ENCODE measurements at regions of chrX and their contacts with region 1.

Region 1: DNA sequence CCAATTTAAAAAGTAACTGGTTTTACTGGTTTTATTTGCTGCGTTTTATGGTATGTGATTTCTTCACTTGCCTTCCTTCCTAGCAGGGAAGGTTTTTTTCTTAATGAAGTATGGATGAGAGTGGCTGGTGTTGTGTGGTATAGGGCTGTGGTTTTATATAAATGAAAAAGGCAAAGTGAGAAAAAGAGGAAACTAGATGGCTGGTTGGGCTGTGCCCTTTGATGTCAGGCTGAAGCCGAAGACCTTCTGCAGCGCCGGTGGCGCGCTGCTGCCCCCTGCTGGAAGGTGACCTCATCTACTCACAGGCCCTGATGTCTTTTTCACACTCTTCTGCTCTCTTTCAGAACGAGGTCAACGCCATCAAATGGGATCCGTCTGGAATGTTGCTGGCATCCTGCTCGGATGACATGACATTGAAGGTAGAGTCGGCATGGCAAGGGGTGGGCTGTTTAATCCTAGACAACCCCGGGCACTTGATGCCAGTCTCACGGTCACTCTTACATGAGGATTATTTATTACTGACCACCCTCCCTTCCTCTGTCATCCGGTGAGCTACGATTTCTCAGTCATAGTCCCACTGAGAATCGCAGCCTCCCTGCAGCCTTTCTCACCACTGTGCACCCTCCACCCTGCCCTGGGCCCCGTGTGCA is 56.6 kb downstream of the GPR143 start:
- DNase-seq: peak; percentile 62 to 88 (median 76)
- ATAC-seq: peak; percentile 89
- H3K4me3 ChIP-seq: no peak overlapping the region
- H3K4me3 Mint-ChIP-seq: no peak overlapping the region
- H3K27ac ChIP-seq: no peak overlapping the region
- H3K27ac Mint-ChIP-seq: no peak overlapping the region
- H3K4me1 ChIP-seq: peaks cover 6% of the 10 kb centered on the region
- H3K4me1 Mint-ChIP-seq: peaks cover 12% of the 10 kb centered on the region
- H3K27me3 ChIP-seq: no peaks in the 10 kb centered on the region
- H3K27me3 Mint-ChIP-seq: no peaks in the 10 kb centered on the region
- CTCF ChIP-seq: peak; percentile 69

Region 2: GRCh38 chrX:7996414-7996813 is 1712.6 kb before region 1 on chrX:
- CTCF ChIA-PET with region 1: no interaction called
- POLR2A ChIA-PET with region 1: no interaction called
- intact Hi-C with region 1: loop called in 1 of 2 experiments (anchors 10 kb)
- DNase-seq: peak in 11 of 14 experiments; percentile 0 to 53 (median 3)
- ATAC-seq: no peak
- H3K4me3 ChIP-seq: no peak overlapping the region
- H3K4me3 Mint-ChIP-seq: no peak overlapping the region
- H3K27ac ChIP-seq: no peak overlapping the region
- H3K27ac Mint-ChIP-seq: no peak overlapping the region
- H3K4me1 ChIP-seq: no peaks in the 10 kb centered on the region
- H3K4me1 Mint-ChIP-seq: no peaks in the 10 kb centered on the region
- H3K27me3 ChIP-seq: no peaks in the 10 kb centered on the region
- H3K27me3 Mint-ChIP-seq: no peaks in the 10 kb centered on the region
- CTCF ChIP-seq: peak; percentile 38

Region 3: DNA sequence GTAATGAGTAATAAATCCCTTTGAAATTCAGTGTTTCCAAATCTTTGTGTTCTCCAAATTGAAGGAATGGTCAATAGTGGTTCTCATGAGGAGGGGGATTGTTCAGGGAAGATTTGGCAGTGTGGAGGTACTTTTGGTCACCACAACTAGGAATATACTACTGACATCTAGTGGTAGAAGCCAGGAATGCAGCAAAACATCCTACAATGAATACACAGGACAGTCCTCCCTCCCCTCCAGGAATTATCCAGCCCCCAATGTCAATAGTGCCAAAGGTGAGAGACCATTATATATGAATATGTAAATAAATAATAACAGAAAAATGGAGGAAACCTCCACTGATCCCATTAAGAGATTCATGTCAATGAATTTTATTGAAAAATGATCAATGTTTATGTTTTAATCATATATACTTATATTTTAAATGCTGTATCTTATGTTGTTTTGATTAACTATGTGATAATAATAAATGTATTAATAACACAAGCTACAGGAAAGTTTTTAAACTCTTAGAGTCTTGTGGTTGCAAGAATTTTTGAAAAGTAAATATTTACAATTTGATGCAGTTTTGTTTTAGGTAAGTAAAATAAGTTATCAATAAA is 893.5 kb before region 1 on chrX:
- CTCF ChIA-PET with region 1: interaction called, 3 read pairs
- POLR2A ChIA-PET with region 1: no interaction called
- intact Hi-C with region 1: loop called (anchors 1 to 2 kb)
- DNase-seq: peak in 5 of 14 experiments; percentile 5 to 51 (median 49)
- ATAC-seq: no peak
- H3K4me3 ChIP-seq: no peak overlapping the region
- H3K4me3 Mint-ChIP-seq: no peak overlapping the region
- H3K27ac ChIP-seq: no peak overlapping the region
- H3K27ac Mint-ChIP-seq: no peak overlapping the region
- H3K4me1 ChIP-seq: no peaks in the 10 kb centered on the region
- H3K4me1 Mint-ChIP-seq: no peaks in the 10 kb centered on the region
- H3K27me3 ChIP-seq: no peaks in the 10 kb centered on the region
- H3K27me3 Mint-ChIP-seq: peaks cover 5% of the 10 kb centered on the region
- CTCF ChIP-seq: peak; percentile 69

Region 4: DNA sequence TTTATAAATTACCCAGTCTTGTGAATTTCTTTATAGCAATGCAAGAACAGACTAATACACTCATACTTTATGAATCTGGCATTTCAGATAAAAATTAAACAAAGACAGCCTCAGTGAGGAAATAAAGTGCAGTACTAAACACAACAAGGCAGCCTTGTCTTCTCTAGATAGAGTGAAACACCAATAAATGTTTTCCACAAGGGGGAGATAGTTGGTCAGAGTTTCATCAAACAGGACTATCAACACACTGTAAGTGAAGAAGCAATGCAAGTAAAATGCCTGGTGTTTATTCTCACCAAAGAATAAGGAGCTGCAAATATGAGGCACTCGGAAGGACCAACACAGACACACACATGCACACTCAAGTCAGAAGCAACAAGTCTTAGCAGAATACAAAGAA is 737.9 kb before region 1 on chrX:
- CTCF ChIA-PET with region 1: no interaction called
- POLR2A ChIA-PET with region 1: no interaction called
- intact Hi-C with region 1: loop called (anchors 2 kb)
- DNase-seq: peak in 3 of 14 experiments; percentile 64 to 66 (median 65)
- ATAC-seq: peak; percentile 74
- H3K4me3 ChIP-seq: no peak overlapping the region
- H3K4me3 Mint-ChIP-seq: no peak overlapping the region
- H3K27ac ChIP-seq: no peak overlapping the region
- H3K27ac Mint-ChIP-seq: no peak overlapping the region
- H3K4me1 ChIP-seq: no peaks in the 10 kb centered on the region
- H3K4me1 Mint-ChIP-seq: no peaks in the 10 kb centered on the region
- H3K27me3 ChIP-seq: no peaks in the 10 kb centered on the region
- H3K27me3 Mint-ChIP-seq: peaks cover 2% of the 10 kb centered on the region
- CTCF ChIP-seq: peak; percentile 46

Region 5: DNA sequence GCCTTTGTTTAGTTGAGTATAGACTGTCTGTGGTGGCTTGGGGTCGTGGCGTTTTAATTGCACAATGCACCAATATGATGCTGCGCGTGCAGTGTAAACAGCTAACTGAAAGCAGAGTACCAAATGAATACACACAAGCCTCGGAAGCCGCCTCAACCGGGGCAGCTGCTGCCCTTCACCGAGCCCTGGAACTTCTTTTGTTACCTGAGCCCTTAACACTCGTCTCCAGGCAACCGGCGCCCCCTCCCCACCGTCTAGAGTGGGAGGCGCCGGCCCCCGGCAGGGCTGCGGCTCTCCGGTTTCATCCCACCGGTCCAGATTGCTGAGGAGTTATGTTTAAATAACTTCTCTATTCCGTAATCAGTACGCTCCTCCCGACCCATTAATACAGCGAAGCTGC is 417.4 kb before region 1 on chrX:
- CTCF ChIA-PET with region 1: no interaction called
- POLR2A ChIA-PET with region 1: no interaction called
- intact Hi-C with region 1: loop called in 1 of 2 experiments (anchors 10 kb)
- DNase-seq: no peak
- ATAC-seq: no peak
- H3K4me3 ChIP-seq: no peak overlapping the region
- H3K4me3 Mint-ChIP-seq: no peak overlapping the region
- H3K27ac ChIP-seq: no peak overlapping the region
- H3K27ac Mint-ChIP-seq: no peak overlapping the region
- H3K4me1 ChIP-seq: no peaks in the 10 kb centered on the region
- H3K4me1 Mint-ChIP-seq: peaks cover 8% of the 10 kb centered on the region
- H3K27me3 ChIP-seq: peaks cover 0 to 2% of the 10 kb centered on the region in 2 experiments
- H3K27me3 Mint-ChIP-seq: no peaks in the 10 kb centered on the region
- CTCF ChIP-seq: no peak

Region 6: DNA sequence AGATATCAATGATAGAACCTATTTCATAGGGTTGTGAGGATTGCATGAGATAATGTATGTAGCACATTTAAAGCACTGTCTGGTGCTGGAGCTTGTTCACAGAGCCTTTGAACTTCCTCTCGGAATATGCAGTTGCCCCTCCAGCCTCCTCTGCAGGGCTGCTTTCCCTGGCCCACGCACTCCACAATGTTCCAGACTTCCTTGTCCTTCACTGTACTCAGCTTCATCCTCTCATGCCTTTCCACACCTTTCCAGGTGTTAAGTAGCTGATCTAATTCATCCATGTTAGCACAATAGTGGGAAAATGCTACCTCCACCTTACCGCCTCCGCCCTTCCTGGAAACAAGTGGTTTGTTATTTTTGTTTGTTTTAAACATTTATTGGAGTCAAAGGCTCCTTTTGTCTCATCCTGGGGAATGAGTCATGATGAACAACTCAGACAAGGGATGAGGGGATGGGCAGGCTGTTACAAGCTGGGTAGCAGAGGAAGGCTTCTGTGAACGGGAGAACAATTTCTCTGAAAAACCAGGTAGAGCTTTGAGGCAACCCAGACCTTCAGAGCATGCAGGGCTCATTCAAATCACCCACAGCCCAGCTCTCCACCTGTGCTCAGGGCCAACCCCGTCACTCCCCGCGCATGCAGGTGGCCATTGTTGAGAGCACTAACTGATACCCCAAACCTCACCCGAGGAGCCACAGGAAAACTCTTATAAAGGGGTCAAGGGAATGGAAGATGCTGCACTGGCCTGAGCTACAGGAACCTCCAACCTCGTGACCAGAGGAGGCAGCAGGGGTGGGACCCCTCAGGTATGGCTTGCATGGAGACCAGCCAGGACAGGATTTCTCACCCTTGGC is 329.1 kb before region 1 on chrX:
- CTCF ChIA-PET with region 1: no interaction called
- POLR2A ChIA-PET with region 1: no interaction called
- intact Hi-C with region 1: no loop called
- DNase-seq: no peak
- ATAC-seq: no peak
- H3K4me3 ChIP-seq: no peak overlapping the region
- H3K4me3 Mint-ChIP-seq: no peak overlapping the region
- H3K27ac ChIP-seq: no peak overlapping the region
- H3K27ac Mint-ChIP-seq: no peak overlapping the region
- H3K4me1 ChIP-seq: no peaks in the 10 kb centered on the region
- H3K4me1 Mint-ChIP-seq: no peaks in the 10 kb centered on the region
- H3K27me3 ChIP-seq: no peaks in the 10 kb centered on the region
- H3K27me3 Mint-ChIP-seq: no peaks in the 10 kb centered on the region
- CTCF ChIP-seq: no peak

Region 7: DNA sequence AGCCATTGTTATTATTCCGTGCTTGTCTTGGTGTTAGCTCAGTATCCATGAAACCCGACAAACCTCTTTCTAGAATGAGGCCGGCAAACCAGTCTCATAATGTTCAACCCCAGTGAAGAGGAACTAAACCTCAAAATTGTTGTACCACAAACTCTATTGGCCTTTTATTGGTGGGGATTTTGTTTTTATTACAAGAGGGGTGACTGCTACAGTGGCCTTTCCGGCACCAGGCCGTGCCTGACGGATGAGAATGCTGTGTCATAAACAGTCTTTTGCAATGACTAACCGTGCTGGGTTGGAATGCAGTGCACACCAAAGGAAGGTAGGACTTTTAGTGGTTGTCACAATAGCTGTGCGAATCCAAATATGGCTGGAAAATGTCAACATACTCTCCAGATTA is 138.0 kb after region 1 on chrX:
- CTCF ChIA-PET with region 1: no interaction called
- POLR2A ChIA-PET with region 1: no interaction called
- intact Hi-C with region 1: no loop called
- DNase-seq: no peak
- ATAC-seq: no peak
- H3K4me3 ChIP-seq: no peak overlapping the region
- H3K4me3 Mint-ChIP-seq: no peak overlapping the region
- H3K27ac ChIP-seq: no peak overlapping the region
- H3K27ac Mint-ChIP-seq: no peak overlapping the region
- H3K4me1 ChIP-seq: no peaks in the 10 kb centered on the region
- H3K4me1 Mint-ChIP-seq: no peaks in the 10 kb centered on the region
- H3K27me3 ChIP-seq: no peaks in the 10 kb centered on the region
- H3K27me3 Mint-ChIP-seq: peaks cover 9% of the 10 kb centered on the region
- CTCF ChIP-seq: no peak

Measured in CD4-positive, alpha-beta T cell (primary cell).